Activated naive CD4-positive, alpha-beta T cell treated with anti-CD3 and anti-CD28 coated beads for 36 hours (primary cell): ENCODE measurements at regions of chr13 and their contacts with region 1.

Region 1: DNA sequence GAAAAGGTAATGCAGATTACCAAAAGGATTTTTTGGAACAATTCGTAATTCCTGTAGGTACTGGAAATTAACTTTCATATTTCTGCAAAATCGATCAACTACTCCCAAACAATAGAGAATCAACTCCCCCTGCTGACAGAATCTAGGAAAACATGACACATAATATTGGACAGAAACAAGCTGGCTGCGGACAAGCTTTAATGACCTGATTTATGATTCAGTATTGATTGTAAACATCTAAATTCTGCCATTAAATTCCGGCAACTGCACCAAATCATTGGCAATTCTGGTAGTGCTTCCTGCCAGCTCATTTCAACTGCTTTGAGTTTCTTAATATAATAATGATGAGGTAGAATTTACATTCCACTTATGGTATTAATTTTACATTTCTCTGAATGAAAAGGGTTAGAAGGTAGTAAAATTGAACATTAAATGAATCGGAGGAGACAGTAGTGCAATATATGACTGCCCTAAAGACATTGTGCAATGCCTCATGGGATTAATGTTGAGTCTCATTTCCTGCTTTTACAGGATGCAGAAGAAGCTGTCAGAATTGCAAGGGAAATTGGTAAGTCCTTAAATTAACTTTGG is 146.5 kb downstream of the PCCA start:
- DNase-seq: no peak
- H3K4me3 Mint-ChIP-seq: no peak overlapping the region
- H3K27ac Mint-ChIP-seq: no peak overlapping the region
- H3K4me1 Mint-ChIP-seq: peaks cover 5% of the 10 kb centered on the region
- H3K27me3 Mint-ChIP-seq: no peaks in the 10 kb centered on the region

Region 2: DNA sequence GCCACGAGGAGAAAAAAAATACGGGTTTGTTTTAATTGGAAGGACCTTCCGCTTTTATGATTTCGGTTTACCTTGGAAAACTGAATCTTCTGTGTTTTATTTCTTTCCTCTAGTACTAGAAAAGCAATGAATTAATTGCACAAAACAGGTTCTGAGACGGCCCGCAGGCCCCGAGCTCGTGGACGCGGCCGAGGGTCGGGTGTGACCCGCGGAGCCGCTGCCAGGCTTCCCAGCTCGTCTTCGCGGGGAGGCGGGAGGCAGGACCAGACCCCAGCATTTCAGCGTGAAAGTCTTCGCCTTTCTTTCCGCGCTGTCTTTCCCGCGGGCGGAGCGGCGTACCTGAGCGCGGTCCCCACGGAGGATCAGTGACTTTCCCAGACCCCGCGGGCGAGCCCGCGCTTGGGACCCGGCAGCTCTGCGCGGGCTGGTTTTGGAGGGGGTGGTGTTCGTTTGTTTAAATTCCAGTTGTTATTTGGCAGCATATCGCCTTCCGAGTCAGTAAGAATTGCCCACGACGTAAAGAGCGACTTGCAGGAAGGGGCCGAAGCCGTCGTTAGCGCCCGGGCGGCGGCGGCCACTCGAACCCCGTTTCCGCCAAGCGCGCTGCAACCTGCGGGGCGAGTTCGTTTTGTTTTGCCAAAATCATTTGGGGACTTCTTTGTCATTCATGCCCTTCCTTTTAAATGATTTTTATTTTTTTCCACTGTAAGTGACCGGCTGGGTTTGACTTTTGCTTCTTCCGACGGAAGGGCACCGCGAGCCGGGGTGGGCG is 340.0 kb before region 1 on chr13:
- CTCF ChIA-PET with region 1: interaction called, 12 read pairs
- intact Hi-C with region 1: loop called (anchors 1 kb)
- DNase-seq: no peak
- H3K4me3 Mint-ChIP-seq: peak overlapping the region; percentile 48
- H3K27ac Mint-ChIP-seq: no peak overlapping the region
- H3K4me1 Mint-ChIP-seq: peaks cover 3% of the 10 kb centered on the region
- H3K27me3 Mint-ChIP-seq: peaks cover 44% of the 10 kb centered on the region

Region 3: DNA sequence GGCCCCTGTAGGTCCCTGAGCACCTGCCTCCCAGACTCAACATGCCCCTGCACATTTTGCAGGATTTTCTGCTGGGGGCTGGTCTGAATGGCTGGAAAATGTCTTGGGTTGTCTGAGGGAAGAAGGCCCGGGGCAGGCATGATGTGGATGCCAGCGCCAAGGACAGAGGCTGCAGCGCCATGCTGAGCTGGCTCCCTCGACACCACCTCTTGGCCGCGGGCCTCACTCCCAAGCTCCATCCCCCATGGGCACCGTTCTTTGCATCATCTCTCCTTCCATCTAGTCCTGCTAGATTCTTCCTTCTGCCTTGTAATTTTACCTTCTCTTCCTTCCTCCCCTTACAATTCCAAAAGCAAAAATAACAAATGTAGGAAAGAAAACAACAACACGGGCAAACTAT is 334.4 kb before region 1 on chr13:
- CTCF ChIA-PET with region 1: interaction called, 12 read pairs
- intact Hi-C with region 1: loop called (anchors 1 kb)
- DNase-seq: no peak
- H3K4me3 Mint-ChIP-seq: no peak overlapping the region
- H3K27ac Mint-ChIP-seq: no peak overlapping the region
- H3K4me1 Mint-ChIP-seq: no peaks in the 10 kb centered on the region
- H3K27me3 Mint-ChIP-seq: peaks cover 50% of the 10 kb centered on the region

Region 4: DNA sequence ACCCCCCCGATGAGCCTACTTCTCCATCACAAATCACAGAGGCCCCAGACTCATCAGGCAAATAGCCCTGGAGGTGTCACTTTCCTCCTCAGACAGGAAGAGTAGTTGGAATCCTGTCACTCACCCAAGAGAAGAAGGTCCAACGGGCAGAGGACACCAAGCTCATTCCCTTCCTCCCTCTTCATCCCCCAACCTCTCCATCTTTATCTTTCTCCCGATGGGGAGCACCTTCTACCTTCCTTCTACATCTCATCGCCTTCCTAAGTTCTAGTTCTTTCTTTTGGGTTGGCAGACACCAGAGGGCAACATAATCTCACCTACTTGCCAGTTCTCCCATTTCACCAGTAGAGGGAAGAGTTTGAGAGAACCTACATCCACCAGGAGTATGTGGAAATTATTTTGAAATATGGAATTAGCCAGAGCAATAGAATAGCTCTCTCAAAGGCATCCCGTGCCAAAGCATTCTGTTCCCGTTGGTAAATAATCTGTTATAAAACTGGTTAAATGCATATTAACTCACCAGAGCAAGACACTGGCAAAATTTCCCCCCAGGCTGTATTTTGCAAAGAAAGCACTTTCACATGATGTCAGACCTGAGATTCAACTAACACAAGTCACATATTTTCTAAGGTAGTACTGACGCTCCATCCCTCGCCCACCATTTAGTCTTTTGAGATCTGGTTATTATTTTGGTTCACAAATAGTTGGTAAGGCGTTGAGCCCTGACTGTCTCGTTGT is 318.9 kb before region 1 on chr13:
- CTCF ChIA-PET with region 1: interaction called, 25 read pairs
- intact Hi-C with region 1: loop called (anchors 1 kb)
- DNase-seq: peak; percentile 40
- H3K4me3 Mint-ChIP-seq: no peak overlapping the region
- H3K27ac Mint-ChIP-seq: no peak overlapping the region
- H3K4me1 Mint-ChIP-seq: peaks cover 7% of the 10 kb centered on the region
- H3K27me3 Mint-ChIP-seq: peaks cover 9% of the 10 kb centered on the region

Region 5: GRCh38 chr13:99980201-99980823 is 255.1 kb before region 1 on chr13:
- CTCF ChIA-PET with region 1: no interaction called
- intact Hi-C with region 1: loop called (anchors 5 kb)
- DNase-seq: peak; percentile 62
- H3K4me3 Mint-ChIP-seq: peak overlapping the region; percentile 15
- H3K27ac Mint-ChIP-seq: no peak overlapping the region
- H3K4me1 Mint-ChIP-seq: peaks cover 23% of the 10 kb centered on the region
- H3K27me3 Mint-ChIP-seq: peaks cover 69% of the 10 kb centered on the region

Region 6: DNA sequence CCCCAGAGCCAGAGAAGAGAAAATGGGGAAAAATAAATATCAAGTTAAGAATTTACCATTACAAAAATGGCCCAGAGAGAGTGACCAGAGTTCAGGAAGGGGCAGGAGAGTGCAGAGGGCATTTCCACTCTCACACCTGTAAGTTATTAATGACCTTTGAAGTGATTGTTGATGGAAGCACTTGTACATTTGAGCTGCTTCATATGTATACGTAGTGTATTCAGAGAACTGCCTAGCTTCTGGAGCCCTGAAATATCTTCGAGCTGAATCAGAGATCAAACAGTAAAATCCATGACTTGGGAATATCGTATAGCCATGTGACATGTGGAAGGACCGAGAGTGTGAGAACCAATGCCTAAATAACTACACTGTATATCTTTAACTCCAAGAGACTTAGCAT is 195.7 kb before region 1 on chr13:
- CTCF ChIA-PET with region 1: interaction called, 3 read pairs
- intact Hi-C with region 1: loop called (anchors 2 kb)
- DNase-seq: no peak
- H3K4me3 Mint-ChIP-seq: no peak overlapping the region
- H3K27ac Mint-ChIP-seq: no peak overlapping the region
- H3K4me1 Mint-ChIP-seq: no peaks in the 10 kb centered on the region
- H3K27me3 Mint-ChIP-seq: no peaks in the 10 kb centered on the region

Region 7: GRCh38 chr13:100514788-100515409 is 279.5 kb after region 1 on chr13:
- CTCF ChIA-PET with region 1: interaction called, 9 read pairs
- intact Hi-C with region 1: loop called (anchors 1 kb)
- DNase-seq: peak; percentile 85
- H3K4me3 Mint-ChIP-seq: no peak overlapping the region
- H3K27ac Mint-ChIP-seq: no peak overlapping the region
- H3K4me1 Mint-ChIP-seq: peaks cover 9% of the 10 kb centered on the region
- H3K27me3 Mint-ChIP-seq: no peaks in the 10 kb centered on the region